B cell (primary cell): ENCODE measurements at regions of chr13 and their contacts with region 1.

Region 1: DNA sequence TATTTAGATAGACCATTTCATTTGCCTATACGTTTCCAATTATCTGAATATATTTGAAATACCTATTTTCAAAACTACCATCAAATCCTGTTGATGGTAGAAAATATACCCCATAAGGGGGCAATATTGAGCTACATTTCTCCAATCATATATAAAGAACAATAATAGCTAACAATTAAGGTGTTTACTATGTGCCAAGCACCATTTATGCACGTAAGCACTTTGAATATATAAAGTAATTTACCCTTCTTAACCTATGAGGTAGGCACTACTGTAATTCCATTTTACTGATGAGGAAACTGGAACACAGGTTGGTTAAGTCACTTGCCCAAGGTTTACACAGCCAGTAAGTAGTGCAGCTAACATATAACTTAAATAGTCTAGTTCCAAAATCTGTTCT is 79.2 kb downstream of the UBL3 start:
- DNase-seq: peak; percentile 69
- ATAC-seq: no peak
- H3K4me3 ChIP-seq: no peak overlapping the region
- H3K4me3 Mint-ChIP-seq: no peak overlapping the region
- H3K27ac ChIP-seq: no peak overlapping the region
- H3K27ac Mint-ChIP-seq: no peak overlapping the region
- H3K4me1 ChIP-seq: no peaks in the 10 kb centered on the region
- H3K4me1 Mint-ChIP-seq: no peaks in the 10 kb centered on the region
- H3K27me3 ChIP-seq: no peaks in the 10 kb centered on the region
- H3K27me3 Mint-ChIP-seq: no peaks in the 10 kb centered on the region
- CTCF ChIP-seq: peak; percentile 82

Region 2: DNA sequence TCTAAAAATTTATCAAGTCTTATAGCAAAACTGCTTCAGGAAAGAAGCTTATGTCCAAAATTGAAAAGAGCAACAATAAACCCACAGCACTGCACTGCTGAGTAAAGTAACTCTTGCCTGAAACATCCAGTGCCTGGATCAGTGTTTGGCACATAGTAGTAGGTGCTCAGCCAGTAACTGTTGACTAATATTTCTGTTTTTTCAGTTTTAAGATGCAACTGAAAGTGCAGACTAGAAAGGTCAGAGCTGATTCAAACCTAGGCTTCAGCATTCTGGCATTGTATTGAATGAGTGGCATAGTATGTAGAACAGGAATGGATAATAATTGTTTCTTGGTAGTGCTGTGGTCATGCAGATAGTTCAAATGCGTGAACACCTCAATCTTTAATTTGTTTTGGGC is 11.6 kb after region 1 on chr13:
- CTCF ChIA-PET with region 1: interaction called, 39 read pairs
- POLR2A ChIA-PET with region 1: no interaction called
- intact Hi-C with region 1: no loop called
- DNase-seq: no peak
- ATAC-seq: no peak
- H3K4me3 ChIP-seq: no peak overlapping the region
- H3K4me3 Mint-ChIP-seq: no peak overlapping the region
- H3K27ac ChIP-seq: no peak overlapping the region
- H3K27ac Mint-ChIP-seq: no peak overlapping the region
- H3K4me1 ChIP-seq: peaks cover 0 to 10% of the 10 kb centered on the region in 2 donors
- H3K4me1 Mint-ChIP-seq: peaks cover 33% of the 10 kb centered on the region
- H3K27me3 ChIP-seq: no peaks in the 10 kb centered on the region
- H3K27me3 Mint-ChIP-seq: no peaks in the 10 kb centered on the region
- CTCF ChIP-seq: no peak

Region 3: DNA sequence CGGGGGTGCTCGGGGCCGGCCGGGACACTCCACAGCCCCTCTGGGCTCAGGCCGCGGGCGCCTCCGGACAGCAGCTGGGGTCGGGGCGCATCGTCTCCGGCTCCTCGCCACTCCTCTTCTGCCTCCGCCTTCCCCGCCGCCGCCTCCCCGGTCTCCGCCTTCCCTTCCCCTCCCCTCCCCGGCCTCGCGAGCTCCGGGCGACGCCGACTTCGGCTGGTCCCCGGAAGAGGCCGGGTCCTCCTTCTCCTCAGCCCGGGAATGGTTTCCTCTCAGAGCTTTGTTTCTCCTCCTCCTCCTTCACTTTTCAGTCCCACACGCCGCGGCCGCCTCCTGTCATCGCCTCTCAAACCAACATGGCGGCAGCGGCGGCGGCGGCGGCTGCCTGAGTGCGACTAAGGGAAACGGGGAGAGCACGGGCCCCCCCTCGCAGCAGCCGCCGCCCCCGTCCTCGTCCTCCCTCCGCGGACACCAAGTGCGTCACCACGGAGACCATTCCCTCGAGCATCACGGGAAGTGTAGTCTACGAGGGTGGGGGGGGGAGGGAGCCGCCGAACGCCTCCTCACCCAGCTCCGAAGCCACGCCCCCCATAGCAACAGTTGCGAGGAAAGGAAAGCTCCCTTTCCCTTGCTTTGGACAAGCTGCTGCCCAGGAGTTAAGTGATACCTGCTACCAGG is 79.1 kb after region 1 on chr13 and contains the start of gene UBL3:
- CTCF ChIA-PET with region 1: interaction called, 19 read pairs
- POLR2A ChIA-PET with region 1: interaction called, 3 read pairs
- intact Hi-C with region 1: loop called (anchors 5 kb)
- DNase-seq: peak; percentile 97
- ATAC-seq: peak; percentile 92
- H3K4me3 ChIP-seq: peak within 1 kb of the TSS; percentile 78 to 99 (median 87)
- H3K4me3 Mint-ChIP-seq: peak within 1 kb of the TSS; percentile 91
- H3K27ac ChIP-seq: peak within 1 kb of the TSS; percentile 93 to 94
- H3K27ac Mint-ChIP-seq: peak within 1 kb of the TSS; percentile 99
- H3K4me1 ChIP-seq: peaks cover 17 to 20% of the 10 kb centered on the region in 2 donors
- H3K4me1 Mint-ChIP-seq: peaks cover 28% of the 10 kb centered on the region
- H3K27me3 ChIP-seq: no peaks in the 10 kb centered on the region
- H3K27me3 Mint-ChIP-seq: no peaks in the 10 kb centered on the region
- CTCF ChIP-seq: no peak
- total RNA-seq, gene UBL3: 26.4 and 27.9 TPM in 2 replicates

Region 4: GRCh38 chr13:30114571-30115256 is 343.5 kb after region 1 on chr13:
- CTCF ChIA-PET with region 1: interaction called, 286 read pairs
- POLR2A ChIA-PET with region 1: no interaction called
- intact Hi-C with region 1: loop called (anchors 1 kb)
- DNase-seq: peak; percentile 92
- ATAC-seq: peak; percentile 93
- H3K4me3 ChIP-seq: peak overlapping the region; percentile 32 to 72 (median 47)
- H3K4me3 Mint-ChIP-seq: peak overlapping the region; percentile 84
- H3K27ac ChIP-seq: no peak overlapping the region
- H3K27ac Mint-ChIP-seq: peak overlapping the region; percentile 66
- H3K4me1 ChIP-seq: peaks cover 6 to 23% of the 10 kb centered on the region in 2 donors
- H3K4me1 Mint-ChIP-seq: peaks cover 28% of the 10 kb centered on the region
- H3K27me3 ChIP-seq: peaks cover 0 to 5% (median 2%) of the 10 kb centered on the region in 4 experiments
- H3K27me3 Mint-ChIP-seq: peaks cover 21% of the 10 kb centered on the region
- CTCF ChIP-seq: peak; percentile 89

Region 5: DNA sequence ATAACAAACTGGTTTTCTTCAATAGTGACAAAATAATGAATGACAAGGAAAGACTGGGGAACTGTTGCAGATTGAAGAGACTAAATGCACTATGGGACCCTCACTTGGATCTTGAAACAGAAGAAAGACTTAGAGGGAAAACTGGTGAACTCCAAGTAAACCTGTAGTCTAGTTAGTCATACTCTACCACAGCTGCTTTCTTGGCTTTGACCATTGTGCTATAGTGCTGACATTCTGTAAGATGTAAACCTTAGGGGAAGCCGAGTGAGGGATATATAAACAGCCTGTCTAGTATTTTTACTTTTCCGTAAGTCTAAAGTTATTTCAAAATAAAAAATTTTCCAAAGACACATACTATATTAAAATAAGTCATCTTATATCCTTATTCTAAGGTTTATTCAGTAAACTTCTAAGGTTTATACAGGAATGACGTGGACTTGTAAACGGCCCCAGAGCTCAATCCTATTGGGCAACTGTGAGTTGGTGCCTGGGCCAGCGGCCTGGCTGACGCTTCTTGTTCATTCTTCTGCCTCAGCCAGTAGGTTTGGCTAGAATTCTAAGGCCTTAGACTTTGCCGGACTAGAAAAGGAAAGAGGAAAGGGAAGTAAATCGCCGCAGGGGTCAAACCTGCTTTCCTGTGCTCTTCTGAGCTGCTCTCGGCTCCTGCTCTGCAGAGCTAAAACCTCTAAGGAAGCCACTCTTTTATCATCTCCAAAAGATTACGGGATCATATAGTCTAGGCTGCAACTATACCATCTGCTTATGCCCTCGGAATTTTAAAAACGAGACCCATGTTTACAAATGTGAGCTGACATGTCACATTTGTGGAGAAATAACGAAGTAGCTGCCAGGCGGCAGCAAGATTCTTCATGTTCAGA is 617.4 kb after region 1 on chr13:
- CTCF ChIA-PET with region 1: no interaction called
- POLR2A ChIA-PET with region 1: no interaction called
- intact Hi-C with region 1: no loop called
- DNase-seq: no peak
- ATAC-seq: no peak
- H3K4me3 ChIP-seq: no peak overlapping the region
- H3K4me3 Mint-ChIP-seq: no peak overlapping the region
- H3K27ac ChIP-seq: no peak overlapping the region
- H3K27ac Mint-ChIP-seq: no peak overlapping the region
- H3K4me1 ChIP-seq: no peaks in the 10 kb centered on the region
- H3K4me1 Mint-ChIP-seq: peaks cover 4% of the 10 kb centered on the region
- H3K27me3 ChIP-seq: no peaks in the 10 kb centered on the region
- H3K27me3 Mint-ChIP-seq: no peaks in the 10 kb centered on the region
- CTCF ChIP-seq: no peak